ENCODE measurements at regions of chr17 and their contacts with region 1.

Region 1: DNA sequence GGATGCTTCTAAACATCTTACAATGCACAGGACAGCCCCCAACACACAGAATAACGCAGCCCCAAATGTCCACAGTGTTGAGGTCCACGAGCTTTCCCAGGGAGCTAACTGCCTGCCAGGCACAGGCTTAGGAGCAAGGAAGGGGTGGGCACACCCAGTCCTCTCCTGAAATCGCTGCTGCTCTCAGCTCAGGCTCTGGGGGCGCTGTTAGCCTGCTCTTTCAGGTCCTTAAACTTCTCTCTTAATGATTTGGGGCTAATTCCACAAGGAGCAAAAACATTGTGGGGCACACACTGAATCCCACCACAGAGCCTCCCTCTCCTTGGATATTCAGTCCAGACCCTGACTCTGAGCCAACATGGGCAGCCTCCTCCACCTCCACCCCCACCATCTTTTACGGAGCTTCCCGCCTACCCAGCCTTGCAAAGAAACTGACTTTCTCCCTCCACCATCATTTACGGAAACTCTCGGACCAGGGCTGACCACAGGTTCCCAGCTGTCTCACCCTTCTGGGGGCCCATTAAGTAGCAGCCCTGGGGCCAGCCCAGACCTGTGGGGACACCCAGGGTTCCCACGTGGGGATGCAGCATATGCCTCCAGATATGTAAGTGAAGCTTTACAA is 1.1 kb downstream of the CD300H start:
- DNase-seq: peak; percentile 82
- H3K4me3 ChIP-seq: no peak overlapping the region; a peak in 1 of 4 replicates
- H3K27ac ChIP-seq: no peak overlapping the region
- H3K4me1 ChIP-seq: no peaks in the 10 kb centered on the region
- H3K27me3 ChIP-seq: no peaks in the 10 kb centered on the region
- CTCF ChIP-seq: peak; percentile 22
- EP300 ChIP-seq: no peak
- RAD21 ChIP-seq: peak; percentile 74

Region 2: DNA sequence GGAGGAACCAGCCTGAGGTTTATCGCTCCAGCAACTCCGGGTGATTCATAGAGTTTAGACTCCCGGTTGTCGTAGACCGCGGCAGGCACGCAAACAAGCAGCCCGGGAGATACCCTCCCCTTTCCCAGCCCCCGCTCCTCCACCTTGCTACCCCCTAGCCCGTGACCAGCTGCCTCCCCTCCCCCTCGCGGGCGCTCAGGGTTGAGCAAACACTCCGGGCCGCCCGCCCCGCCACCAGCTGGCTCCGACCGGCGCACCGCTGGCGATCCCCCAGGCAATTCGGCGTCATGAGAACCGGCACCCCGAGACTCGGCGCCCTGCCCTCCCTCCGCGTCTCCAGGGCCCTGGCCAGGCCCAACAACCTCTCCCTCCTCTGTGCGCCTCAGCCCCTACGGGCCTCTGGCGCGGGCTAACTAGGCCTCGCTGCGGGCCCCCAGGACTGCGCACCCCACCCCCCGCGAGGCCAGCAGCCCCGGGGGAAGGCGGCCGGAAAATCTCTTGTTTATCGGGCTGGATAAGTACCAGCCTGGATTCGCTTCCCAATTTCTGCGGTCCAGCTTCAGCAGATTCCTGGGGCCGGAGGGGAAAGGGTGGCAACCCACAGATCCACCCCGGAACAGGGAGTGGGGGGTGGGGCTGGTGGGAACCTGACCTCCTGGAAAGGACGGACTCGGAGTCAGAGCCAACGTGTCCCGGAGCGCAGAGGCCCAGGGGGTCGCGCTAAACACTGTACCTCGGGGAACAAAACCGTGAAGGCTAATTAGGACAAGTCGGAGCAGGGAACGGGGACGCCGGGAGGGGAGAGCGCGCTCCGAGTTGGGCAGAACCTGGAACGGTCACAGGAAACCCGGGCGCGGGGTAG is 135.3 kb before region 1 on chr17:
- CTCF ChIA-PET with region 1: no interaction called
- POLR2A ChIA-PET with region 1: no interaction called
- DNase-seq: peak; percentile 72
- H3K4me3 ChIP-seq: peak overlapping the region in 1 of 2 experiments; percentile 39; a peak in 1 of 4 replicates
- H3K27ac ChIP-seq: no peak overlapping the region
- H3K4me1 ChIP-seq: peaks cover 0 to 11% of the 10 kb centered on the region in 2 experiments; a peak in 1 of 4 replicates
- H3K27me3 ChIP-seq: no peaks in the 10 kb centered on the region
- CTCF ChIP-seq: no peak
- EP300 ChIP-seq: no peak
- RAD21 ChIP-seq: no peak

Region 3: GRCh38 chr17:74449773-74450172 is 116.5 kb before region 1 on chr17:
- CTCF ChIA-PET with region 1: no interaction called
- POLR2A ChIA-PET with region 1: no interaction called
- DNase-seq: no peak
- H3K4me3 ChIP-seq: no peak overlapping the region
- H3K27ac ChIP-seq: no peak overlapping the region
- H3K4me1 ChIP-seq: peaks cover 0 to 22% of the 10 kb centered on the region in 2 experiments; a peak in 2 of 4 replicates
- H3K27me3 ChIP-seq: no peaks in the 10 kb centered on the region
- CTCF ChIP-seq: no peak
- EP300 ChIP-seq: no peak
- RAD21 ChIP-seq: no peak

Region 4: DNA sequence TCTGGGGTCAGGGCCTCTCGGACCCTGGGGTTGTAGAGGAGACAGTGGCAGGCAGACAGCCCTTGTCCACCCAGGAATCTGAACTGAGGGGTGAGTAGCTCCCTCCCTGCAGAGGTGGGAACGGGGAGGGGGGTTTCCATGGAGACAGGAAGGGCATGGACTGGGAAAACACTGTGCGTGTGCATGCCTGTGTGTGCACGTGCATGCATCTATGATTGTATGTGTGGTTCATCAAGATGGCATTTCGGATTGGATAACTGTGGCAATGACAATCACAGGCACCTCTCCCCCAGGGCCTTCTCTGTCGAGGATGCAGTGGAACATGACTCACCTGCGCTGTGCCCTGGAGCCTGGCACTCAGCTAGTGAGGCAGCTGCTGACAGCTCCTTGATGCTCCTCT is 14.2 kb before region 1 on chr17:
- CTCF ChIA-PET with region 1: interaction called, 60 read pairs
- POLR2A ChIA-PET with region 1: no interaction called
- DNase-seq: no peak
- H3K4me3 ChIP-seq: no peak overlapping the region
- H3K27ac ChIP-seq: no peak overlapping the region
- H3K4me1 ChIP-seq: no peaks in the 10 kb centered on the region
- H3K27me3 ChIP-seq: no peaks in the 10 kb centered on the region
- CTCF ChIP-seq: no peak
- EP300 ChIP-seq: no peak
- RAD21 ChIP-seq: no peak

Region 5: GRCh38 chr17:74601944-74602572 is 35.8 kb after region 1 on chr17:
- CTCF ChIA-PET with region 1: interaction called, 28 read pairs
- POLR2A ChIA-PET with region 1: no interaction called
- DNase-seq: peak; percentile 68
- H3K4me3 ChIP-seq: peak overlapping the region in 1 of 2 experiments; percentile 35; a peak in 1 of 4 replicates
- H3K27ac ChIP-seq: no peak overlapping the region
- H3K4me1 ChIP-seq: peaks cover 0 to 7% of the 10 kb centered on the region in 2 experiments; a peak in 1 of 4 replicates
- H3K27me3 ChIP-seq: no peaks in the 10 kb centered on the region
- CTCF ChIP-seq: peak; percentile 40
- EP300 ChIP-seq: no peak
- RAD21 ChIP-seq: peak; percentile 68

Region 6: GRCh38 chr17:74625661-74626060 is 59.4 kb after region 1 on chr17:
- CTCF ChIA-PET with region 1: interaction called, 15 read pairs
- POLR2A ChIA-PET with region 1: no interaction called
- DNase-seq: no peak
- H3K4me3 ChIP-seq: no peak overlapping the region
- H3K27ac ChIP-seq: no peak overlapping the region
- H3K4me1 ChIP-seq: no peaks in the 10 kb centered on the region
- H3K27me3 ChIP-seq: no peaks in the 10 kb centered on the region
- CTCF ChIP-seq: no peak
- EP300 ChIP-seq: no peak
- RAD21 ChIP-seq: no peak

Region 7: DNA sequence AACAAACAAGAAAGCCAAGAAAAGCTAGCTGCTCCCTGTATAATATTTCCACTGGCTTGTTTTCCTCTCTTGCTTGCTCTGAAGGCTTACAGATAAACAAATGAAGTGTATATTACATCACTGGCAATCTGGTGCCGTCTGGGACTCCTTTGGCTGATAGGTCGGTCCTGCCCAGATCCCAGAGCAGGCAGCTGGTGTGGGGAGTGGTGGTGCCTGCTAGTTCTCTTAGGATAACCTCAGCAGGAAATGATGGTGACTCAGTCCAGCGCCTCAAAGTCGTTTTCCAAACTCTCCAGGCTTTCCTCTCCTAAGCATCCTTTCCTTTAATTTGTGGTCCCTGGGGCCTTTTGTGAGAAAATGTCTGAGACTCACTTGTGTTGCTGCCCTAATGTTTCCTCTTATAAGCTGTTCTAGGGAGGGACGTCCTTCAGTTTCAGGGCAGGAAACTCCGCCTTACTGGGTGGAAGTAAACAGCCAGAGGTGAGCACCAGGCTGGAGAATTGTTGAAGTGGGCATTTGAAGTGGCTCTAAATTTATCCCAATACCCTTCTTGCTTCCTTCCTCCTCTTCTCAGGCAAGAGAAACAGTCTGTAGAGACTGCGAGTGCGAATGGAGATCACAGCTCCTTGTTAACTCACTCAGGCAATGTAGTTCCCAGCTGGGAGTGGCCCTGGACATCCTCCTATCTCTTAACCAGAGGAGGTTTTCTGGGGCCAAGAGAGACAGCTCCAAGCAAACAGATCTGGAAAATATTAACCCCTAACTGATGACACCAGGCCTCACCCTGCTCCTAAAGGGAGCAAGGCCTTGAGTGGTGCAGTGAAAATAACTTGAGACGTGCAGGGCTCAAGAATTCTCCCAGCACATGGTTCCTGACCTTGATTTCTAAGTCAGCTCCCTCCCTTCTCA is 111.6 kb after region 1 on chr17:
- CTCF ChIA-PET with region 1: interaction called, 12 read pairs
- POLR2A ChIA-PET with region 1: no interaction called
- DNase-seq: peak; percentile 77
- H3K4me3 ChIP-seq: no peak overlapping the region
- H3K27ac ChIP-seq: no peak overlapping the region; a peak in 1 of 4 replicates
- H3K4me1 ChIP-seq: peaks cover 0 to 8% of the 10 kb centered on the region in 2 experiments; a peak in 1 of 4 replicates
- H3K27me3 ChIP-seq: no peaks in the 10 kb centered on the region
- CTCF ChIP-seq: no peak
- EP300 ChIP-seq: no peak
- RAD21 ChIP-seq: no peak

Region 8: GRCh38 chr17:74851612-74852236 is 285.5 kb after region 1 on chr17:
- CTCF ChIA-PET with region 1: no interaction called
- POLR2A ChIA-PET with region 1: no interaction called
- DNase-seq: no peak
- H3K4me3 ChIP-seq: no peak overlapping the region
- H3K27ac ChIP-seq: no peak overlapping the region
- H3K4me1 ChIP-seq: no peaks in the 10 kb centered on the region; a peak in 1 of 4 replicates
- H3K27me3 ChIP-seq: peaks cover 36% of the 10 kb centered on the region
- CTCF ChIP-seq: no peak
- EP300 ChIP-seq: no peak
- RAD21 ChIP-seq: no peak

Measured in SK-N-SH (cell line).